Activated CD4-positive, alpha-beta T cell treated with anti-CD3 and anti-CD28 coated beads, Interleukin-2, amount 10 ng/mL, durations not matched to agents 24 days and 14 days (primary cell): ENCODE measurements at regions of chr2 and their contacts with region 1.

Region 1: GRCh38 chr2:13006829-13007717 is 290.3 kb downstream of the TRIB2 start:
- DNase-seq: peak; percentile 88
- H3K4me3 Mint-ChIP-seq: no peak overlapping the region
- H3K27ac Mint-ChIP-seq: no peak overlapping the region
- H3K4me1 Mint-ChIP-seq: no peaks in the 10 kb centered on the region
- H3K27me3 Mint-ChIP-seq: peaks cover 45% of the 10 kb centered on the region

Region 2: DNA sequence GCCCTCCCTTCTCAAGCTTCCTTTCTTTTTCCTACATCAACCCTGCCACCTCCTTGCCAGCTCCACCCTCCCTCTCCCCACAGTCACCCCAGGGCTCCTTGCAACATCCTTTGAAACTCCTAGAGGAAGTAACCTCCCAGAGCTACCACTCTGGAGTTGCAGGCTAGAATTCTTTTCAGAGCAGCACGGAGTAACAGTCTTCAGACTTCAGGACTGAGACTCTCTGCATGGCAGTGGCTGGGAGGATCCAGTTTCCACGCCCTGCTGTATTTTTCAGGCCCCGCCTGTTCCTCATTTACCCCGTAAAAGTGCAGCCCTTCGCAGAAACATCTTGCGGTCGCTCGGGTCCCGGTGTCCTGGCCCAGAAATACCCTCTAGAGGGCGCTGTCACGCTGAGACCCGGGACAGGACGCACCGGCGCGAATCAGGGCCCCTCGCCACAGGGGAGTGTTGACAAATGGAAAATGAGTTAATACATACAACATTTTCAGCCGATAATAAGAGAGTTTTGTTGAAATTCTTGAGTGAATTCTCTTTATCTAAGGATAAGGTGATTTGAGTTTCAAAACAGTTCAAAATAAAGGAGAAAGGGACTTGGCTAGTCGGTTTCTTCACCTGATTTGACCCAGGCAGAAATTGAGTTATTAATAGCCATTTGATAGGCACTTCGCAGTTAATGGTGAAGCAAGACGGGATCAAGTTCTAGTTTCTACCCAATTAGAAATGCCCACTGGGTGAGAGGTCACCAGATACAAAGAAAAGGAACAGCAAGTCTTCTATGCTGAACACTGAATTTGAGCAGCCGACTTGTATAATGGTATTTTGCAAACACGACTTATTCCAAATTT is 1318.6 kb before region 1 on chr2:
- intact Hi-C with region 1: loop called (anchors 2 kb)
- DNase-seq: peak; percentile 96
- H3K4me3 Mint-ChIP-seq: peak overlapping the region; percentile 74
- H3K27ac Mint-ChIP-seq: peak overlapping the region; percentile 23
- H3K4me1 Mint-ChIP-seq: peaks cover 15% of the 10 kb centered on the region
- H3K27me3 Mint-ChIP-seq: peaks cover 8% of the 10 kb centered on the region

Region 3: GRCh38 chr2:11863513-11864328 is 1143.4 kb before region 1 on chr2:
- intact Hi-C with region 1: loop called (anchors 1 kb)
- DNase-seq: peak; percentile 89
- H3K4me3 Mint-ChIP-seq: no peak overlapping the region
- H3K27ac Mint-ChIP-seq: no peak overlapping the region
- H3K4me1 Mint-ChIP-seq: peaks cover 9% of the 10 kb centered on the region
- H3K27me3 Mint-ChIP-seq: peaks cover 17% of the 10 kb centered on the region

Region 4: GRCh38 chr2:12931186-12931844 is 75.8 kb before region 1 on chr2:
- intact Hi-C with region 1: loop called (anchors 2 kb)
- DNase-seq: peak; percentile 61
- H3K4me3 Mint-ChIP-seq: no peak overlapping the region
- H3K27ac Mint-ChIP-seq: no peak overlapping the region
- H3K4me1 Mint-ChIP-seq: peaks cover 11% of the 10 kb centered on the region
- H3K27me3 Mint-ChIP-seq: peaks cover 49% of the 10 kb centered on the region